Stomach (tissue), 19 donors: ENCODE measurements at regions of chr17 and their contacts with region 1.

Region 1: DNA sequence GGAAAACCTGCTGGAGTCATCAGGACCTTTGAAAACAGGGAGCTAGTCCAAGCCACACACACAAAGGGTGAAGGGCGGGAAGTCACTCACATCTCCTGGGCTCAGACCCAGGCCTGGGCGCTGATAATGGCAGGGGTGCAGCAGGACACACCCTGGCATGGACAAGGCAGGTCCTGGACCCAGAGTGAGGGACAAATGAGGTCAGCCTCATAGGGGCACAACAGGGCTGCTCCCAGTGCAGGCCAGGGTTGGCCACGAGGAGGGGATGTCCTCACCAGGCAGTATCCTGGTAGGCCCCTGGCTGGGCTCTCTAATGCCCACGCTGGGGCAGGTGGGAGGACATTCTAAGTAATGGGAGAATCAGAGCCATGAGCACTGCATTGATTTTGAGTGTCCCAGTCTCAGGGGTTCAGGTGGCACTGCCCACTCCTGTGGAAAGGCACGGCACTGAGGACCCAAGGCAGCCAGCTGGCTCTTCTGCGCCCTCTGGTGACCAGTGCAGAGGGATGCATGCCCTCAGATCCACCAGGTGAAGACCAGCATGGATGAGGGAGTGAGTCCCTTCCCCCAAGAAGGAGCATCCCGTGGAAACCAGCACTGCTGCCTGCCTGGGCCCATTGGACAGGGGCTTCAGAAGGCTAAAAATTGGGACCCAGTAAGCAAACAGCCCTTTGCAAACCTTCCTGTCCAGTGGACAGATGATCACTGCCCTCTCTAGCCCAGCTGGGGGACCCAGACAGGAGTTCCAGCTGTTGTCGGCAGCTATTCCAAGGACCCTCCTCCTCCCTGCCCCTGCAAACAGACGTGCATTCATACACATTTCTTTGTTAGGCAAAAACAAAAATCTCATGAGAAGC is 23.4 kb upstream of the SREBF1 start:
- DNase-seq: peak; percentile 81 to 88
- H3K4me3 ChIP-seq: no peak overlapping the region
- H3K27ac ChIP-seq: peak overlapping the region; percentile 20 to 67 (median 43)
- H3K4me1 ChIP-seq: peaks cover 13 to 34% (median 27%) of the 10 kb centered on the region in 4 donors
- H3K27me3 ChIP-seq: no peaks in the 10 kb centered on the region
- CTCF ChIP-seq: peak in 5 of 7 experiments; percentile 91 to 98 (median 97)
- EP300 ChIP-seq: no peak
- POLR2A ChIP-seq: no peak

Region 2: DNA sequence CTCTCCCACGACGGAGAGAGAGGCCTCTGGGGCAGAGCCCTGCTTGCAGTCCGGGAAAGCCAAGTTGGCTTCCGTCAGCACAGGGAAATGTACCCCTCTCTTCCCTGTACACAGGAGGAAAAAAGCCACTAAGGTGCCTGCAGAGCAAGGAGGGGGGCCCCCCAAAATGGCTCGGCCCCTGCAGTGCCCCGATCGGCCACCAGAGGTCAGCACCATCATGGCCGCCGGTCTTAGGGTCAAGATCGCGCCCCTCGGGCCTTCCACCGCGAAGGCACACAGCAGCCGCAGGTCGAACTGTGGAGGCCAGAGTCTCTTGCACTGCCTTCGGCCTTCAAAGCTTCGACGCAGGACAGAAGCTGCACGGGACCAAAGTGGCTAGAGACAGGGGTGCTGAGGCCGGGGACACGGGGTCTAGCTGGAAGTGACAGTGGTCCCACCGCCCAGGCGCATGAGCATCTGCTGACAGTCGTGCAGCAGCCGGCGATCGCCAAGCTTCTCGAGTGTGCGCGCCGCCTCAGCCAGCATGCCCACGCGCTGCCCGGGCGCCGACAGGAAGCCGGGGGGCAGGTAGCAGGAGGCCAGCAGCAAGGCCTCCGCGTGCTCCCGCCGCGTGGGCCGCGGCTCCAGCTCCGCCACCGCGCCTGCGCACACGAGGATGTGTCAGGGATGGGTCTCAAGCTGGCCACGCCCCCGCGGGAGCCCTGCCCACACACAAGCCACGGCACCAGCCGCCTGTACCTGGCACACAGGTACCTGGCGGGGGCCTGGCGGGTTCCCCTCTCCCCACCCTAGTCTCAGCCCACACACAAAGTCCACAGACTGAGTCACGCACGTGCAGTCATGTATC is 47.7 kb before region 1 on chr17:
- intact Hi-C with region 1: loop called (anchors 5 kb)
- DNase-seq: peak; percentile 79 to 90
- H3K4me3 ChIP-seq: no peak overlapping the region
- H3K27ac ChIP-seq: peak overlapping the region; percentile 24 to 71 (median 58)
- H3K4me1 ChIP-seq: peaks cover 26 to 68% (median 47%) of the 10 kb centered on the region in 4 donors
- H3K27me3 ChIP-seq: no peaks in the 10 kb centered on the region
- CTCF ChIP-seq: peak; percentile 35 to 100 (median 99)
- EP300 ChIP-seq: no peak
- POLR2A ChIP-seq: no peak